ENCODE measurements at regions of chr19 and their contacts with region 1.

Region 1: DNA sequence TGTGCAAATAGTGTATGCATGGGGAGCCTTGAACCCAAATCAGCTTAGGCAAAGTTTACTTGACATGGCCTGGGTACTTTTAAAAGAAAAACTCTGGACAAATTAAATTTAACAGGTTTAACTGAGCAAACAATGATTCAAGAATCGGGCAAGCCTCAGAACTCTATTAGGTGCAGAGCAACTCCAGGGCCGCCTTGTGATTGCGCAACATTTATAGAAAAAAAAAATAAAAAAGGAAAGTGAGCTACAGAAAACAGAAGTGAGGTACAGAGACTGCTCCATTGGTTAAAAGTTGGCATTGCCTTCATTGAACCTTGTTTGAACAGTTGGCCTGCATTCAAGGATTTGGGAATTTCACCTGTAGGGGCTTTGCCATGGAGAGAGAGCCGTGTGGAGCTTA is 421.0 kb upstream of the TSHZ3 start:
- DNase-seq: no peak
- H3K4me3 ChIP-seq: no peak overlapping the region
- H3K27ac ChIP-seq: no peak overlapping the region
- H3K4me1 ChIP-seq: no peaks in the 10 kb centered on the region
- H3K27me3 ChIP-seq: no peaks in the 10 kb centered on the region
- CTCF ChIP-seq: no peak
- EP300 ChIP-seq: no peak
- POLR2A ChIP-seq: no peak

Region 2: GRCh38 chr19:29964171-29964570 is 1806.0 kb before region 1 on chr19:
- in situ Hi-C with region 1: no loop called
- intact Hi-C with region 1: loop called (anchors 5 kb)
- DNase-seq: no peak
- H3K4me3 ChIP-seq: no peak overlapping the region
- H3K27ac ChIP-seq: no peak overlapping the region
- H3K4me1 ChIP-seq: peaks cover 0 to 66% (median 18%) of the 10 kb centered on the region in 4 donors
- H3K27me3 ChIP-seq: no peaks in the 10 kb centered on the region
- CTCF ChIP-seq: no peak
- EP300 ChIP-seq: no peak
- POLR2A ChIP-seq: no peak

Region 3: DNA sequence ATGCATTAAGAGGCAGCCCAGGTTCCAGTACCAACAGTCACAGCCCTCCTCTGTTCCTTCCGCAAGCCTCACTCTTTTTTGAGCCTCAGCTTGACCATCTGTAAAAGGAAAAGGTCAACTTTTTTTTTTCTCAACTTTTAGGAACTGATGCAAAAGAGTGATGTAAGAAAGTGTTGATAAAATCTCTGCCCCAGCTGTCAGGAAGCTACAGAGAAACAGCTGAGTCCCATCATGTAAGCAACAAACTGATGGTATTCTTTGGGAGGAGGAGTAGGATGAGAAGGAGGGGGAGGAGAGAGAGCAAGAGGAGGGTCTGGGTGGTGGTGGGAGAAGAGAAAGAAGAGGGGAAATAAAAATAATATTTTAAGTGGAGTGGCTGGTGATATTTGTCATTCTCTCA is 187.1 kb before region 1 on chr19:
- in situ Hi-C with region 1: no loop called
- intact Hi-C with region 1: no loop called
- DNase-seq: no peak
- H3K4me3 ChIP-seq: no peak overlapping the region
- H3K27ac ChIP-seq: peak overlapping the region in 2 of 4 donors; percentile 9 to 37
- H3K4me1 ChIP-seq: no peaks in the 10 kb centered on the region
- H3K27me3 ChIP-seq: no peaks in the 10 kb centered on the region
- CTCF ChIP-seq: no peak
- EP300 ChIP-seq: no peak
- POLR2A ChIP-seq: no peak

Region 4: GRCh38 chr19:31832176-31832548 is 61.9 kb after region 1 on chr19:
- in situ Hi-C with region 1: no loop called
- intact Hi-C with region 1: no loop called
- DNase-seq: no peak
- H3K4me3 ChIP-seq: no peak overlapping the region
- H3K27ac ChIP-seq: no peak overlapping the region
- H3K4me1 ChIP-seq: no peaks in the 10 kb centered on the region
- H3K27me3 ChIP-seq: no peaks in the 10 kb centered on the region
- CTCF ChIP-seq: no peak
- EP300 ChIP-seq: no peak
- POLR2A ChIP-seq: no peak